ENCODE measurements at regions of chr4 and their contacts with region 1.

Region 1: GRCh38 chr4:80365928-80366327 is 30.4 kb downstream of the CFAP299 start:
- DNase-seq: peak; percentile 23
- ATAC-seq: peak; percentile 86
- H3K4me3 ChIP-seq: no peak overlapping the region
- H3K27ac ChIP-seq: no peak overlapping the region
- H3K4me1 ChIP-seq: no peaks in the 10 kb centered on the region
- H3K27me3 ChIP-seq: no peaks in the 10 kb centered on the region
- CTCF ChIP-seq: peak; percentile 71
- EP300 ChIP-seq: no peak
- POLR2A ChIP-seq: no peak
- RAD21 ChIP-seq: no peak

Region 2: GRCh38 chr4:79982601-79983322 is 383.2 kb before region 1 on chr4:
- CTCF ChIA-PET with region 1: no interaction called
- POLR2A ChIA-PET with region 1: no interaction called
- in situ Hi-C with region 1: no loop called
- intact Hi-C with region 1: no loop called
- DNase-seq: no peak
- ATAC-seq: no peak
- H3K4me3 ChIP-seq: no peak overlapping the region
- H3K27ac ChIP-seq: no peak overlapping the region
- H3K4me1 ChIP-seq: no peaks in the 10 kb centered on the region
- H3K27me3 ChIP-seq: no peaks in the 10 kb centered on the region
- CTCF ChIP-seq: no peak
- EP300 ChIP-seq: no peak
- POLR2A ChIP-seq: no peak
- RAD21 ChIP-seq: no peak

Region 3: GRCh38 chr4:80295336-80295735 is 70.6 kb before region 1 on chr4:
- CTCF ChIA-PET with region 1: no interaction called
- POLR2A ChIA-PET with region 1: no interaction called
- in situ Hi-C with region 1: no loop called
- intact Hi-C with region 1: no loop called
- DNase-seq: no peak
- ATAC-seq: no peak
- H3K4me3 ChIP-seq: no peak overlapping the region
- H3K27ac ChIP-seq: no peak overlapping the region
- H3K4me1 ChIP-seq: no peaks in the 10 kb centered on the region
- H3K27me3 ChIP-seq: no peaks in the 10 kb centered on the region
- CTCF ChIP-seq: no peak
- EP300 ChIP-seq: no peak
- POLR2A ChIP-seq: no peak
- RAD21 ChIP-seq: no peak

Region 4: GRCh38 chr4:80989921-80990544 is 624.1 kb after region 1 on chr4:
- CTCF ChIA-PET with region 1: interaction called, 6 read pairs
- POLR2A ChIA-PET with region 1: no interaction called
- in situ Hi-C with region 1: loop called (anchors 5 kb)
- intact Hi-C with region 1: loop called (anchors 1 kb)
- DNase-seq: peak; percentile 40
- ATAC-seq: peak; percentile 74
- H3K4me3 ChIP-seq: no peak overlapping the region
- H3K27ac ChIP-seq: no peak overlapping the region
- H3K4me1 ChIP-seq: no peaks in the 10 kb centered on the region
- H3K27me3 ChIP-seq: no peaks in the 10 kb centered on the region
- CTCF ChIP-seq: peak; percentile 67
- EP300 ChIP-seq: no peak
- POLR2A ChIP-seq: no peak
- RAD21 ChIP-seq: peak; percentile 34; the same call in 1 of the 2 replicates

Region 5: DNA sequence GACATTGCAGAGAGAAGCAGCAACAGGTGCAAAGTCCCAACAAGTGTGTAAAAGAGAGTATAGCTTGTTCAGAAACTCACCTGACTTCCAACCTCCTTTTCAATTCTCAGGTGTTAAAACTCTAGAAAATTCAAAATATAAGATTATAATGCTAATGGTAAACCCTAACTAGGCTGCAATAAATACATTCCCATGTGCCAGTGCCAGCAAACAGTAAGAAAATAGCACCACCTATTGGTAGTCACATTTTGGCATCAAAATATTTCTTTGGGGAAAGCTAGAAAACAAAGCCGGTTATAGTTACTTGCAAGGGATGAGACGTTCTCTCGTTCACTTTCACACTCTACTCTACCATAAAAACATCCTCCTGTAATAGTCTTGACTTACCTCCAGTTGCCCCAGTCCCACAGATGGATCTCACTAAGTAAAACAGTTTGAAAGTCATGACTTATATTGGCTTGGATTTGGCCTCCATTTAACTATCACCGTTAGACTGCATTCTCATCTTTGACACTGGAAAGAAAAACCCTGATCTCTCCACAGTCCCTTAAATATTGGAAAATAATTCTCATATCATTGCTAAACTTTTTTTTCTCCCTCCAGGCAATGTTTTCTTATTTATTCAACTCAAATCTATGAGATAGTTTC is 674.2 kb after region 1 on chr4:
- CTCF ChIA-PET with region 1: interaction called, 11 read pairs
- POLR2A ChIA-PET with region 1: no interaction called
- in situ Hi-C with region 1: loop called (anchors 5 kb)
- intact Hi-C with region 1: no loop called
- DNase-seq: no peak
- ATAC-seq: 0 out of 3 replicates have a peak, but pooled peaks have one; percentile 22
- H3K4me3 ChIP-seq: no peak overlapping the region
- H3K27ac ChIP-seq: no peak overlapping the region
- H3K4me1 ChIP-seq: no peaks in the 10 kb centered on the region
- H3K27me3 ChIP-seq: no peaks in the 10 kb centered on the region
- CTCF ChIP-seq: peak; percentile 64
- EP300 ChIP-seq: no peak
- POLR2A ChIP-seq: no peak
- RAD21 ChIP-seq: no peak

Region 6: GRCh38 chr4:81052119-81053068 is 686.5 kb after region 1 on chr4:
- CTCF ChIA-PET with region 1: interaction called, 11 read pairs
- POLR2A ChIA-PET with region 1: no interaction called
- in situ Hi-C with region 1: no loop called
- intact Hi-C with region 1: loop called (anchors 1 kb)
- DNase-seq: peak; percentile 51
- ATAC-seq: peak; percentile 96
- H3K4me3 ChIP-seq: no peak overlapping the region
- H3K27ac ChIP-seq: no peak overlapping the region
- H3K4me1 ChIP-seq: no peaks in the 10 kb centered on the region
- H3K27me3 ChIP-seq: no peaks in the 10 kb centered on the region; a peak in 1 of 5 replicates
- CTCF ChIP-seq: peak; percentile 72
- EP300 ChIP-seq: no peak
- POLR2A ChIP-seq: no peak
- RAD21 ChIP-seq: peak; percentile 31; the same call in 1 of the 2 replicates